Esophagus squamous epithelium (tissue), 5 donors: ENCODE measurements at regions of chr4 and their contacts with region 1.

Region 1: GRCh38 chr4:183840311-183840710 is 64.8 kb upstream of the STOX2 start:
- DNase-seq: no peak
- H3K4me3 ChIP-seq: no peak overlapping the region
- H3K27ac ChIP-seq: no peak overlapping the region
- H3K4me1 ChIP-seq: peaks cover 0 to 9% (median 0%) of the 10 kb centered on the region in 3 donors
- H3K27me3 ChIP-seq: no peaks in the 10 kb centered on the region
- CTCF ChIP-seq: peak; percentile 70 to 93 (median 84)
- POLR2A ChIP-seq: no peak

Region 2: DNA sequence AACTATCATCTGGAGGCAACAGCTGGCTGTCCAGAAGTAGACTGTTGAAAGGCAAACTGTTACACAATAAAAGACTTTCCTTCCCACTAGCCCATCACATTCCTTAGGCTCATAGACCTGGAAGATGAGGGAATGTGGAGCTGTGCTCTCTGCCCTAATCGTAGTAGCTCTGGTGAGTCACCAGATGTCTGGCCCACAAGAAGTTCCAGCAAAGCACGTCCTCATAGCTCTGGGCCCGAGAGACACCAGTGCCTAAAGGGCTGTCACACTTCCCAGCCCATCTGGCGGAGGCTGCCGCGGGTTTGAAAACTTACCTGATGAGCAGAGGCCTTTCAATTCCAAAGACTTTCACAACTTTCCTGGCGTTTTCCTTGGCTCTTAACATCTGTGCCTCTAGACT is 16.9 kb before region 1 on chr4:
- intact Hi-C with region 1: no loop called
- DNase-seq: no peak
- H3K4me3 ChIP-seq: no peak overlapping the region
- H3K27ac ChIP-seq: peak overlapping the region; percentile 44 to 81 (median 61)
- H3K4me1 ChIP-seq: peaks cover 12 to 75% (median 42%) of the 10 kb centered on the region in 3 donors
- H3K27me3 ChIP-seq: no peaks in the 10 kb centered on the region
- CTCF ChIP-seq: no peak
- POLR2A ChIP-seq: no peak

Region 3: DNA sequence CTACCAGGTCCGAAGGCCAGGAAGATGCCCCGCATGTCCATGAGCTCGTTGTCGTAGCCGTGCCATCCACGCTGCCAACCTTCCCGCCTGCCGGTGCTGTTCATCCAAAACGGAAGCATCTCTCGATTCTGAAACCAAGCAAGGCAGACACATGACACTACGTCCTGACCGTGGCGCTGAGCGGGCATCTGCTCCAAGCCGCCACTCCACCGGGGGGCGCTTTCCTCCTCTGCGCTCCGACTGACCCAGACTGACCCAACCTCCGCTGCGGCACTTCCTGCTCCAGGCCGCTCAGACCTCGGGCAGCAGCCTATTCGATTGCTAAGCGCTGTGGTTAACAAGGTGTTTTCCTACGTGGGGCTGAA is 256.9 kb after region 1 on chr4:
- intact Hi-C with region 1: loop called (anchors 10 kb)
- DNase-seq: no peak
- H3K4me3 ChIP-seq: peak overlapping the region in 3 of 4 donors; percentile 19 to 56 (median 34)
- H3K27ac ChIP-seq: peak overlapping the region; percentile 21 to 73 (median 58)
- H3K4me1 ChIP-seq: peaks cover 0 to 25% (median 0%) of the 10 kb centered on the region in 3 donors
- H3K27me3 ChIP-seq: peaks cover 0 to 4% (median 0%) of the 10 kb centered on the region in 4 donors
- CTCF ChIP-seq: peak in 4 of 6 experiments; percentile 19 to 44 (median 34)
- POLR2A ChIP-seq: no peak

Region 4: GRCh38 chr4:184168406-184169019 is 328.2 kb after region 1 on chr4:
- intact Hi-C with region 1: loop called (anchors 5 kb)
- DNase-seq: no peak
- H3K4me3 ChIP-seq: peak overlapping the region in 2 of 4 donors; percentile 3 to 43
- H3K27ac ChIP-seq: no peak overlapping the region
- H3K4me1 ChIP-seq: peaks cover 0 to 10% (median 6%) of the 10 kb centered on the region in 3 donors
- H3K27me3 ChIP-seq: peaks cover 0 to 41% (median 0%) of the 10 kb centered on the region in 4 donors
- CTCF ChIP-seq: peak; percentile 65 to 94 (median 92)
- POLR2A ChIP-seq: no peak

Region 5: GRCh38 chr4:184250795-184251669 is 410.7 kb after region 1 on chr4:
- intact Hi-C with region 1: loop called (anchors 5 kb)
- DNase-seq: no peak
- H3K4me3 ChIP-seq: no peak overlapping the region
- H3K27ac ChIP-seq: no peak overlapping the region
- H3K4me1 ChIP-seq: no peaks in the 10 kb centered on the region
- H3K27me3 ChIP-seq: no peaks in the 10 kb centered on the region
- CTCF ChIP-seq: peak; percentile 48 to 59 (median 54)
- POLR2A ChIP-seq: no peak